ENCODE measurements at regions of chr7 and their contacts with region 1.

Region 1: DNA sequence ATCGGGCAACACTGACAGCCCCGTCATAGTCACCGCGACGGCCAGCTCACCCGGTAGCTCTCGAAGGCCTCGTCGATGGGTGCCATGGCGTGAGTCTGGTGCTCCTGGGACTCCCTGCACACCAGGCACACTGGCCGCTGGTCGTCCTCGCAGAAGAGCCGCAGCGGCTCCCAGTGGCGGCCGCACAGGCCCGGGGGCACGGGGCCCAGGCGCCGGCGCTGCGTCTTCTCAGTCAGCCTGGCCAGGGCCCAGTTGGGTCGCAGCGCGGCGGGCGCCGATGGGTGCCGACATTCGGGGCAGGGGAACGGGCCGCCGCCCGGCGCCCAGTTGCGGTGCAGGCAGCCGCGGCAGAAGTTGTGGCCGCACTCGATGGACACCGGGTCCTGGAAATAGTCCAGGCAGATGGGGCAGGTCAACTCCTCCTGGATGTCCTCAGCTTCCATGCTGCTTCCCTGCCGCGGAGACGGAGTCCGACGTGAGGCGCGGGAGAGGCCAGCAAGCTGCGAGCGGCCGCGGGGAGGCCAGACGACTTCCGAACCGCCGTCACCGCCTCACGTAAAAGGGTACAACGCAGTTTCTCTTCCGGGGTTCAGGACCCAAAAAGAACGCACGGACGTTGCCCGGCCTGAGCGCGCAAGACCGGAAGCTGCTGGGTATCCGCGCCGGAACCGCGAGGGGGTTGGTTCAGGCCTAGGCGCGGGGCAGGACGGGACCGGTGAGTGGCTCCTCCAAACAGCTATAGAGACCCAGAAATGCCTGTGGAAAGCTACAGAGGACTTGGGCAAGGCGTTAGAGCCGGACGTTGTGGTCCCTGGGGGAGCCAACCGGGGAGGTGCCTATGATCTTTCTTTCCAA is at the start of gene TRIM4:
- DNase-seq: peak; percentile 88 to 92 (median 90)
- H3K4me3 ChIP-seq: peak within 1 kb of the TSS; percentile 57 to 85 (median 68)
- H3K4me3 Mint-ChIP-seq: peak within 1 kb of the TSS; percentile 87 to 94
- H3K27ac ChIP-seq: peak within 1 kb of the TSS; percentile 90 to 91
- H3K27ac Mint-ChIP-seq: peak within 1 kb of the TSS; percentile 93 to 97 (median 96)
- H3K4me1 ChIP-seq: peaks cover 28 to 38% of the 10 kb centered on the region in 2 donors
- H3K4me1 Mint-ChIP-seq: peaks cover 33% of the 10 kb centered on the region
- H3K27me3 ChIP-seq: no peaks in the 10 kb centered on the region
- H3K27me3 Mint-ChIP-seq: peaks cover 2 to 3% (median 3%) of the 10 kb centered on the region in 3 donors
- CTCF ChIP-seq: no peak
- polyA plus RNA-seq, gene TRIM4: 10.8 to 17.9 (median 12.5) TPM

Region 2: DNA sequence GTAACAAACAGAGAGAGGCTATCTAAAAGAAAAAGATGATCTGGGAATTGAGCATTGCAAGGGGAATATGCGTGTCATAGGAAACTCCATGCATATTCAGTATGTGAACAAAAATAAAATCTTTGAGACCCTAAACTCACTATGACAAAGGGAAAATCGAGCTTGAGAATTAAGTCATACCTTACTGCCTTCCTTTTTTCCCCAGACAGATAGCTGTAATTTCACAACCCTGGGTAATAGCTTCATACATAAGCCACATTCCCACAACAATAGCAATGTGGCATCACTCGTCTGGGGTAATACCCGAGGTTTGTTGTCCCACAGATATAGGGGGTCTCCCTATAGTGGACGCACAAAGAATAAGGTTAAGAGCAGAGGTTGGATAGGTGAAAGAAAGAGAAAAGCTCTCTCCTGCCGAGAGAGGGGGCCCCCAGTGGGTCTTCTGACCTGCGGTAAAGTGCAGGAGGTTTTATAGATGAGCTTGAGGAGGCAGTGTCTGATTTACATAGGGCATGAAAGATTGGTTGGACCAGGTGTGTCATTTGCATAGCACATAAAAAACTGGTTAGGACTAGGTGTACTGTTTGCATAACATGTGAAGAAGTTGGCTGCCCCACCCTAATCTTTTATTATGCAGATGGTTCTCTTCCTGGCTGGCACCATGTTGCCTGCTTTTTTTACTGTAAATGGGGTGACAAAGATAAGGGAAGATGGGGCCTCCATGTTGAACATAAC is 79.7 kb before region 1 on chr7:
- intact Hi-C with region 1: no loop called
- DNase-seq: no peak
- H3K4me3 ChIP-seq: no peak overlapping the region
- H3K4me3 Mint-ChIP-seq: no peak overlapping the region
- H3K27ac ChIP-seq: no peak overlapping the region
- H3K27ac Mint-ChIP-seq: no peak overlapping the region
- H3K4me1 ChIP-seq: peaks cover 6% of the 10 kb centered on the region in 2 donors
- H3K4me1 Mint-ChIP-seq: peaks cover 15% of the 10 kb centered on the region
- H3K27me3 ChIP-seq: no peaks in the 10 kb centered on the region
- H3K27me3 Mint-ChIP-seq: peaks cover 0 to 5% (median 1%) of the 10 kb centered on the region in 3 donors
- CTCF ChIP-seq: no peak

Region 3: DNA sequence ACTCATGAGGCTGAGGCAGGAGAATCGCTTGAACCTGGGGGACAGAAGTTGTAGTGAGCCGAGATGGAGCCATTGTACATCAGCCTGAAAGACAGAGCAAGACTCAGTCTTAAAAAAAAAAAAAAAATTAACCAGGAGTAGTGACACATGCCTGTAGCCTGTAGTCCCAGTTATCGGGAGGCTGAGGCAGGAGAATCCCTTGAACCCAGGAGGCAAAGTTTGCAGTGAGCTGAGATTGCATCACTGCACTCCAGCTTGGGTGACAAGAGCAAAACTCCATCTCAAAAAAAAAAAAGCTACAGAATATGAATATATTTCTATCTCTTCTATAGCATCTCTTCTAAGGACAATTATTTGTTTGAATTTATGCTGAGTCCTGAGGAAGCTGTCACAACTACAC is 50.1 kb after region 1 on chr7:
- intact Hi-C with region 1: no loop called
- DNase-seq: no peak
- H3K4me3 ChIP-seq: no peak overlapping the region
- H3K4me3 Mint-ChIP-seq: no peak overlapping the region
- H3K27ac ChIP-seq: no peak overlapping the region
- H3K27ac Mint-ChIP-seq: no peak overlapping the region
- H3K4me1 ChIP-seq: no peaks in the 10 kb centered on the region
- H3K4me1 Mint-ChIP-seq: no peaks in the 10 kb centered on the region
- H3K27me3 ChIP-seq: peaks cover 0 to 6% of the 10 kb centered on the region in 2 donors
- H3K27me3 Mint-ChIP-seq: peaks cover 8 to 32% (median 10%) of the 10 kb centered on the region in 3 donors
- CTCF ChIP-seq: no peak

Region 4: GRCh38 chr7:100049441-100050311 is 130.5 kb after region 1 on chr7 and contains the start of gene ZSCAN21:
- intact Hi-C with region 1: loop called (anchors 10 kb)
- DNase-seq: peak; percentile 81 to 89 (median 84)
- H3K4me3 ChIP-seq: peak within 1 kb of the TSS; percentile 83 to 97 (median 87)
- H3K4me3 Mint-ChIP-seq: peak within 1 kb of the TSS; percentile 86 to 93
- H3K27ac ChIP-seq: peak within 1 kb of the TSS; percentile 88 to 96
- H3K27ac Mint-ChIP-seq: peak within 1 kb of the TSS; percentile 88 to 98 (median 95)
- H3K4me1 ChIP-seq: peaks cover 14 to 18% of the 10 kb centered on the region in 2 donors
- H3K4me1 Mint-ChIP-seq: peaks cover 14% of the 10 kb centered on the region
- H3K27me3 ChIP-seq: no peaks in the 10 kb centered on the region
- H3K27me3 Mint-ChIP-seq: peaks cover 2 to 6% (median 2%) of the 10 kb centered on the region in 3 donors
- CTCF ChIP-seq: peak; percentile 25
- polyA plus RNA-seq, gene ZSCAN21: 1.5 to 4.6 (median 4.4) TPM

Region 5: DNA sequence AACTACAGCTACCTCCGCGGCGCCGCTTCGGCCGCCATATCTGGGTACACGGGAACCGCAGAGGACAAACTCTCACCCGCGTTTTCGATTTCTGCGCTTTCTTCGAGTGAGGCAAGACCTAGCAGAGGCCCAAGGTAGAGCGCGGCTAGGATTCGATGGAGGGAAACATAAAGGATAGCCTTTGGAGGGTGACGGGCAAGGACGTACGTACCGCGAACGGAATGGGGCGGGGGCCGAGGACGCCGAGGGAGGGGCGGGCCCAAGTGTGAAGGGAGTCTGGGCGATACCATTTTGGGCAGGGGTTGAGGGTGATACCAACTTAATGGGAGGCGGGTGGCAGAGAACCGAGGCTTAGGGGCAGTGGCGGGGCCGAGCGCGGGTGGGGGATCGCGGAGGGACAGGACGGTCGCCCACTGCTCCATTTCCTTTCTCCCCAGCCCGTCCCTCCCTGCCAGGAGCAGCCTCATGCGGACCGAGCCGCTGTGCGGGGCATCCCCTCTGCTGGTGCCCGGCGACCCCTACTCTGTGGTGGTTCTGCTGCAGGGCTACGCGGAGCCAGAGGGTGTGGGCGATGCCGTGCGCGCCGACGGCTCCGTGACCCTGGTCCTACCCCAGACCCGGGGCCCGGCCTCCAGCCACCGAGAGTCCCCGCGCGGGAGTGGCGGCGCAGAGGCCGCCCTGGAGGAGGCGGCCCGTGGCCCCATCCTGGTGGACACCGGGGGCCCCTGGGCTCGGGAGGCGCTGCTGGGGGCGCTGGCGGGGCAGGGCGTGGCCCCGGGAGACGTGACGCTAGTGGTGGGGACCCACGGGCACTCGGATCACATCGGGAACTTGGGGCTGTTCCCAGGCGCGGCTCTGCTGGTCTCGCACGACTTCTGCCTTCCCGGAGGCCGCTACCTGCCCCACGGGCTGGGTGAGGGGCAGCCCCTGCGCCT is 208.0 kb after region 1 on chr7 and contains the start of gene MBLAC1:
- intact Hi-C with region 1: loop called in 1 of 2 experiments (anchors 5 kb)
- DNase-seq: peak; percentile 81 to 90 (median 84)
- H3K4me3 ChIP-seq: peak within 1 kb of the TSS; percentile 83 to 93 (median 87)
- H3K4me3 Mint-ChIP-seq: peak within 1 kb of the TSS; percentile 98 to 99
- H3K27ac ChIP-seq: peak within 1 kb of the TSS; percentile 92 to 93
- H3K27ac Mint-ChIP-seq: peak within 1 kb of the TSS; percentile 98 to 100 (median 99)
- H3K4me1 ChIP-seq: peaks cover 42 to 52% of the 10 kb centered on the region in 2 donors
- H3K4me1 Mint-ChIP-seq: peaks cover 45% of the 10 kb centered on the region
- H3K27me3 ChIP-seq: peaks cover 0 to 14% of the 10 kb centered on the region in 2 donors
- H3K27me3 Mint-ChIP-seq: peaks cover 11 to 19% (median 17%) of the 10 kb centered on the region in 3 donors
- CTCF ChIP-seq: no peak
- polyA plus RNA-seq, gene MBLAC1: 0.57 to 0.81 (median 0.59) TPM

Region 6: GRCh38 chr7:100167921-100168323 is 248.7 kb after region 1 on chr7:
- intact Hi-C with region 1: no loop called
- DNase-seq: no peak
- H3K4me3 ChIP-seq: peak overlapping the region in 2 of 3 experiments; percentile 1 to 68
- H3K4me3 Mint-ChIP-seq: peak overlapping the region; percentile 78 to 94
- H3K27ac ChIP-seq: no peak overlapping the region
- H3K27ac Mint-ChIP-seq: peak overlapping the region in 1 of 7 donors; percentile 83
- H3K4me1 ChIP-seq: peaks cover 36 to 42% of the 10 kb centered on the region in 2 donors
- H3K4me1 Mint-ChIP-seq: peaks cover 41% of the 10 kb centered on the region
- H3K27me3 ChIP-seq: peaks cover 38 to 65% of the 10 kb centered on the region in 2 donors
- H3K27me3 Mint-ChIP-seq: peaks cover 64 to 84% (median 70%) of the 10 kb centered on the region in 3 donors
- CTCF ChIP-seq: no peak

Region 7: GRCh38 chr7:100190048-100190711 is 271.0 kb after region 1 on chr7:
- intact Hi-C with region 1: no loop called
- DNase-seq: peak in 2 of 3 donors; percentile 26 to 33
- H3K4me3 ChIP-seq: no peak overlapping the region
- H3K4me3 Mint-ChIP-seq: no peak overlapping the region
- H3K27ac ChIP-seq: no peak overlapping the region
- H3K27ac Mint-ChIP-seq: peak overlapping the region in 2 of 7 donors; percentile 4 to 16
- H3K4me1 ChIP-seq: peaks cover 21 to 27% of the 10 kb centered on the region in 2 donors
- H3K4me1 Mint-ChIP-seq: peaks cover 29% of the 10 kb centered on the region
- H3K27me3 ChIP-seq: no peaks in the 10 kb centered on the region
- H3K27me3 Mint-ChIP-seq: peaks cover 0 to 2% (median 1%) of the 10 kb centered on the region in 3 donors
- CTCF ChIP-seq: peak; percentile 58

Measured in CD14-positive monocyte (primary cell).